CD8-positive, alpha-beta T cell (primary cell): ENCODE measurements at regions of chrX and their contacts with region 1.

Region 1: DNA sequence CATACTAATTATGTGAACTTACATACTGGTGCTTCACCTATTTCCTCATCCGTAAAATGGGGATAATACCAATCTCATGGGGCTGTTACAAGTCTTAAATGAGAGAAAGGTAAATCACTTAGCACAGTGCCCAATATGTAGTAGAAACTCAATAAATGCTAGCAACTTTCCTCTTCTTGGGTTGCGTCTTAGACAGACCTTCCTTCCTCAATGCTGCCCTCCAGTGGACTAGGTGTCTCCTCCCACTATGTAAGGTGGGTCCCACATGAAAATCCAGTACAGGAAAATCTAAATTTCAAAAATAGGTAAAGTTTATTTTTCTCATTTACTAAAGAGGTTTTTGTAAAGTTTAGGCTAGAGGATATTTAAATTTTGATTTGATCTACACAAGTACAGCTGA is 20.6 kb downstream of the ZDHHC9 start:
- DNase-seq: peak; percentile 4 to 79 (median 61)
- ATAC-seq: peak; percentile 78
- H3K4me3 ChIP-seq: no peak overlapping the region
- H3K4me3 Mint-ChIP-seq: no peak overlapping the region
- H3K27ac ChIP-seq: no peak overlapping the region
- H3K27ac Mint-ChIP-seq: no peak overlapping the region
- H3K4me1 ChIP-seq: no peaks in the 10 kb centered on the region
- H3K4me1 Mint-ChIP-seq: peaks cover 13% of the 10 kb centered on the region
- H3K27me3 ChIP-seq: no peaks in the 10 kb centered on the region
- H3K27me3 Mint-ChIP-seq: no peaks in the 10 kb centered on the region
- CTCF ChIP-seq: peak; percentile 49

Region 2: GRCh38 chrX:129637217-129638109 is 185.7 kb before region 1 on chrX:
- CTCF ChIA-PET with region 1: interaction called, 44 read pairs
- POLR2A ChIA-PET with region 1: no interaction called
- intact Hi-C with region 1: loop called (anchors 1 kb)
- DNase-seq: peak; percentile 54 to 87 (median 75)
- ATAC-seq: peak; percentile 74
- H3K4me3 ChIP-seq: no peak overlapping the region
- H3K4me3 Mint-ChIP-seq: no peak overlapping the region
- H3K27ac ChIP-seq: no peak overlapping the region
- H3K27ac Mint-ChIP-seq: no peak overlapping the region
- H3K4me1 ChIP-seq: no peaks in the 10 kb centered on the region
- H3K4me1 Mint-ChIP-seq: no peaks in the 10 kb centered on the region
- H3K27me3 ChIP-seq: no peaks in the 10 kb centered on the region
- H3K27me3 Mint-ChIP-seq: no peaks in the 10 kb centered on the region
- CTCF ChIP-seq: peak; percentile 67

Region 3: DNA sequence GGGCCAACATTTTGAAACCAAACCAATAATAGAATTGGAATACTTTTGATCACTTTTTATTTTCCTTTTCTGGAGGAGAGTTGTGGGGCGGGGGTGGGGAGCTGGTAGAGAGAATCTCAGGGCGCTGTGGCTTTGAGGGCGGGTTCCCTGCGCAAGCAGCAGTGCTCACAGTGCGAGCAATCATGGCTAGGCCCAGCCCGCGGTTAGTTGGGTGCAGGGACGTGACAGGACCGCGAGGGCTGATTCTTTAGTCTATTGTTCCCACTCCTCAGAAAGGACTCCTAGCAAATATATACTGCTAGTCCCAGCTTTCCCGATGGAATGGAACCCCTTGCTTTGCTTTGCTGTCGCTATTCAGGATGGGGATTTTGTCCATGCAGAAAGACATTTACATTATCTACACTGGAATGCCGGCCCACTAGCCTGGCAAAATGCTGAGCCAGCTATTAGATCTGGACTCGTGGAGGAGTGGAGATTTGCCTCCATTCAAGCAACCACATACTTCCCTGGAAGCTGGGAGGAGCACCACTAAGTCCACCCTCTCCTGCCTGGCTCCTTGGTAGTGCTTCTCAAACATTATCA is 144.4 kb before region 1 on chrX:
- CTCF ChIA-PET with region 1: interaction called, 6 read pairs
- POLR2A ChIA-PET with region 1: interaction called, 4 read pairs
- intact Hi-C with region 1: loop called in 1 of 2 experiments (anchors 1 kb)
- DNase-seq: peak in 8 of 9 experiments; percentile 2 to 67 (median 50)
- ATAC-seq: peak; percentile 72
- H3K4me3 ChIP-seq: peak overlapping the region; percentile 49 to 58
- H3K4me3 Mint-ChIP-seq: peak overlapping the region; percentile 73
- H3K27ac ChIP-seq: peak overlapping the region in 1 of 2 experiments; percentile 35
- H3K27ac Mint-ChIP-seq: peak overlapping the region; percentile 82
- H3K4me1 ChIP-seq: peaks cover 18% of the 10 kb centered on the region
- H3K4me1 Mint-ChIP-seq: peaks cover 18% of the 10 kb centered on the region
- H3K27me3 ChIP-seq: no peaks in the 10 kb centered on the region
- H3K27me3 Mint-ChIP-seq: no peaks in the 10 kb centered on the region
- CTCF ChIP-seq: no peak

Region 4: GRCh38 chrX:129754056-129755024 is 68.8 kb before region 1 on chrX:
- CTCF ChIA-PET with region 1: interaction called, 12 read pairs
- POLR2A ChIA-PET with region 1: no interaction called
- intact Hi-C with region 1: loop called (anchors 1 to 2 kb)
- DNase-seq: peak in 1 of 9 experiments; percentile 22
- ATAC-seq: no peak
- H3K4me3 ChIP-seq: no peak overlapping the region
- H3K4me3 Mint-ChIP-seq: no peak overlapping the region
- H3K27ac ChIP-seq: no peak overlapping the region
- H3K27ac Mint-ChIP-seq: peak overlapping the region; percentile 69
- H3K4me1 ChIP-seq: peaks cover 47% of the 10 kb centered on the region
- H3K4me1 Mint-ChIP-seq: peaks cover 50% of the 10 kb centered on the region
- H3K27me3 ChIP-seq: no peaks in the 10 kb centered on the region
- H3K27me3 Mint-ChIP-seq: no peaks in the 10 kb centered on the region
- CTCF ChIP-seq: no peak

Region 5: DNA sequence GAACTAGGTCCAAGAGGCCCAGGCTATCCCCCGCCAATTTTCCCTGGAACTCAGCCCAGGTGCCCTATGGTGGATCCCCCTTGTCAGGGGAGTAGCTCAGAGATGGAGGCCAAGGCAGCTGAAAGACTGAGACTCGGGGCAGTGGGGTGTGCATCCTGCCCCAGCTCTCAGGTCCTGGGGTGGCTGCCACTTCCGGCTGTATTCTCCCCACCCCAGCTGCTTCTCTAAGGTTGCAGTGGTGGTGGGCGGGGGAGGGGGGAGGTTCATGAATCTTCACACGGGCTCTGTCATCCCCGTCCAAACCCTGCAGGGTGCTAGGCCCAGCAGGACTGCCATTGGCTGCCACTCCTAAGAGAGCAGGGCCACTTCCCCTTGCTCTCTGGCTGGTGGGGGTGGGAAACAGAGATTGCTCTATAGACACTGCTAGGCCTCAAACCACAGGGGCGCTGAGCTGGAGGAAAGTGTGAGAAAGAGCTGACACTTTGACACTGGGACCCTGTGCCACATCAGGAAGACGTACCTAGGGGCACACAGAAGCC is 41.9 kb before region 1 on chrX:
- CTCF ChIA-PET with region 1: interaction called, 8 read pairs
- POLR2A ChIA-PET with region 1: no interaction called
- intact Hi-C with region 1: loop called in 1 of 2 experiments (anchors 5 kb)
- DNase-seq: peak; percentile 58 to 94 (median 79)
- ATAC-seq: peak; percentile 78
- H3K4me3 ChIP-seq: peak overlapping the region; percentile 67 to 97
- H3K4me3 Mint-ChIP-seq: peak overlapping the region; percentile 94
- H3K27ac ChIP-seq: peak overlapping the region; percentile 68 to 91
- H3K27ac Mint-ChIP-seq: peak overlapping the region; percentile 96
- H3K4me1 ChIP-seq: peaks cover 68% of the 10 kb centered on the region
- H3K4me1 Mint-ChIP-seq: peaks cover 64% of the 10 kb centered on the region
- H3K27me3 ChIP-seq: no peaks in the 10 kb centered on the region
- H3K27me3 Mint-ChIP-seq: no peaks in the 10 kb centered on the region
- CTCF ChIP-seq: no peak

Region 6: GRCh38 chrX:130285069-130285620 is 462.0 kb after region 1 on chrX:
- CTCF ChIA-PET with region 1: no interaction called
- POLR2A ChIA-PET with region 1: no interaction called
- intact Hi-C with region 1: no loop called
- DNase-seq: no peak
- ATAC-seq: no peak
- H3K4me3 ChIP-seq: no peak overlapping the region
- H3K4me3 Mint-ChIP-seq: no peak overlapping the region
- H3K27ac ChIP-seq: no peak overlapping the region
- H3K27ac Mint-ChIP-seq: no peak overlapping the region
- H3K4me1 ChIP-seq: no peaks in the 10 kb centered on the region
- H3K4me1 Mint-ChIP-seq: no peaks in the 10 kb centered on the region
- H3K27me3 ChIP-seq: no peaks in the 10 kb centered on the region
- H3K27me3 Mint-ChIP-seq: no peaks in the 10 kb centered on the region
- CTCF ChIP-seq: no peak